Naive thymus-derived CD4-positive, alpha-beta T cell (primary cell): ENCODE measurements at regions of chr13 and their contacts with region 1.

Region 1: GRCh38 chr13:100674848-100675660 is 459 bp upstream of the TMTC4 start:
- DNase-seq: peak; percentile 97 to 100 (median 99)
- ATAC-seq: peak; percentile 96
- H3K4me3 ChIP-seq: peak overlapping the region; percentile 93
- H3K4me3 Mint-ChIP-seq: peak overlapping the region; percentile 86 to 95 (median 90)
- H3K27ac ChIP-seq: peak overlapping the region; percentile 84
- H3K27ac Mint-ChIP-seq: peak overlapping the region; percentile 64 to 91 (median 86)
- H3K4me1 ChIP-seq: peaks cover 7 to 9% of the 10 kb centered on the region in 2 donors
- H3K4me1 Mint-ChIP-seq: peaks cover 17 to 38% (median 30%) of the 10 kb centered on the region in 7 donors
- H3K27me3 ChIP-seq: no peaks in the 10 kb centered on the region
- H3K27me3 Mint-ChIP-seq: peaks cover 0 to 20% (median 0%) of the 10 kb centered on the region in 5 donors

Region 2: GRCh38 chr13:100088644-100089464 is 586.2 kb before region 1 on chr13 and contains the start of gene PCCA:
- CTCF ChIA-PET with region 1: no interaction called
- POLR2A ChIA-PET with region 1: no interaction called
- intact Hi-C with region 1: loop called (anchors 1 to 10 kb)
- DNase-seq: peak; percentile 43 to 86 (median 51)
- ATAC-seq: peak; percentile 87
- H3K4me3 ChIP-seq: peak within 1 kb of the TSS; percentile 77
- H3K4me3 Mint-ChIP-seq: peak within 1 kb of the TSS; percentile 90 to 99 (median 95)
- H3K27ac ChIP-seq: peak within 1 kb of the TSS; percentile 58
- H3K27ac Mint-ChIP-seq: peak within 1 kb of the TSS; percentile 44 to 96 (median 79)
- H3K4me1 ChIP-seq: peaks cover 0 to 19% of the 10 kb centered on the region in 2 donors
- H3K4me1 Mint-ChIP-seq: peaks cover 22 to 41% (median 27%) of the 10 kb centered on the region in 7 donors
- H3K27me3 ChIP-seq: no peaks in the 10 kb centered on the region
- H3K27me3 Mint-ChIP-seq: peaks cover 0 to 5% (median 0%) of the 10 kb centered on the region in 5 donors
- total RNA-seq, gene PCCA: 8.3 to 14.6 (median 12.0) TPM

Region 3: GRCh38 chr13:100658363-100658762 is 16.7 kb before region 1 on chr13:
- CTCF ChIA-PET with region 1: no interaction called
- POLR2A ChIA-PET with region 1: no interaction called
- intact Hi-C with region 1: loop called in 1 of 2 experiments (anchors 1 kb)
- DNase-seq: no peak
- ATAC-seq: peak; percentile 54
- H3K4me3 ChIP-seq: no peak overlapping the region
- H3K4me3 Mint-ChIP-seq: peak overlapping the region in 5 of 10 donors; percentile 23 to 54 (median 44)
- H3K27ac ChIP-seq: no peak overlapping the region
- H3K27ac Mint-ChIP-seq: peak overlapping the region in 5 of 9 donors; percentile 17 to 68 (median 40)
- H3K4me1 ChIP-seq: peaks cover 4 to 16% of the 10 kb centered on the region in 2 donors
- H3K4me1 Mint-ChIP-seq: peaks cover 12 to 45% (median 19%) of the 10 kb centered on the region in 7 donors
- H3K27me3 ChIP-seq: no peaks in the 10 kb centered on the region
- H3K27me3 Mint-ChIP-seq: no peaks in the 10 kb centered on the region

Region 4: DNA sequence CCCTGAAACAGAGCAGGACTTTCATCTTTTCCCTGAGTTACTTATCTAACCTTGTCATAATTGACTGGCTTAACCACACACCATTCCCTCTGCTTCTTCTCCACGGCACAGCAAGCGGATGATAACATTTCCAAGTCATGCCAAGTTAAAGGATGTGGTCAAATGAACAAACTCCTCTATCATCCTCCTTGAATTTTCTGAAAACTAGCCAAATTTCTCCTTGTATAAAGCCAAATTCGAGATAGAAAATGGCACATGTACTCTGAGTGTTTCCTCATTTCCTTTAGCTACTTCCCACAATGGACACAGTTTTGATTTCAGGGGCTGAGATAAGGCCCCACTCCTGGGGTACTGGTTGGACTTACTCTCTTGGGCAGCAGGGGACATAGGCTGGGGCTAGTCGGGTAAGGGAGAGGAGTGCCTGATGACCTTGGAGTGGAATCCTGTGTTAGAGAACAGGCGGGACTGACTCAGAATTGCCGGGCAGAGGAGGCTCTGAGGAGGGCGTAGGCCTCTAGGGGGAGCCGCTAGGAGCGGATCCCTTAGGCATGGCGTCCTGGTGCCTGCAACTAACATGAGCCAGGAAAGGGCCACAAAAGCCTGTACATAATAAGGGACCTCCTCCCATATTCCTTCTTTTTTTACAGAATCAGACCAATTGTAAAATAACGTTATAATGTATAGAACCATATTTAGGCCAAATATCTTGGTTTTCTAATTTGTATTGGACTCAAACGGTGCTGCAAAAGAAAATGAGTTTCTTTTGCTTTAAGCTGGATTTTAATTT is 19.9 kb after region 1 on chr13:
- CTCF ChIA-PET with region 1: no interaction called
- POLR2A ChIA-PET with region 1: no interaction called
- intact Hi-C with region 1: no loop called
- DNase-seq: no peak
- ATAC-seq: no peak
- H3K4me3 ChIP-seq: no peak overlapping the region
- H3K4me3 Mint-ChIP-seq: no peak overlapping the region
- H3K27ac ChIP-seq: no peak overlapping the region
- H3K27ac Mint-ChIP-seq: no peak overlapping the region
- H3K4me1 ChIP-seq: no peaks in the 10 kb centered on the region
- H3K4me1 Mint-ChIP-seq: no peaks in the 10 kb centered on the region
- H3K27me3 ChIP-seq: no peaks in the 10 kb centered on the region
- H3K27me3 Mint-ChIP-seq: peaks cover 10 to 37% (median 28%) of the 10 kb centered on the region in 5 donors

Region 5: GRCh38 chr13:101626925-101627555 is 952.0 kb after region 1 on chr13:
- CTCF ChIA-PET with region 1: no interaction called
- POLR2A ChIA-PET with region 1: no interaction called
- intact Hi-C with region 1: loop called (anchors 10 kb)
- DNase-seq: peak in 6 of 9 donors; percentile 24 to 62 (median 48)
- ATAC-seq: peak; percentile 73
- H3K4me3 ChIP-seq: peak overlapping the region; percentile 40
- H3K4me3 Mint-ChIP-seq: peak overlapping the region; percentile 63 to 92 (median 78)
- H3K27ac ChIP-seq: peak overlapping the region; percentile 67
- H3K27ac Mint-ChIP-seq: peak overlapping the region; percentile 15 to 89 (median 76)
- H3K4me1 ChIP-seq: peaks cover 29 to 33% of the 10 kb centered on the region in 2 donors
- H3K4me1 Mint-ChIP-seq: peaks cover 9 to 49% (median 48%) of the 10 kb centered on the region in 7 donors
- H3K27me3 ChIP-seq: no peaks in the 10 kb centered on the region
- H3K27me3 Mint-ChIP-seq: peaks cover 0 to 27% (median 0%) of the 10 kb centered on the region in 5 donors